Right cardiac atrium (tissue), 5 donors: ENCODE measurements at regions of chrX and their contacts with region 1.

Region 1: GRCh38 chrX:131763674-131764073 is 219.8 kb downstream of the OR13H1 start:
- DNase-seq: peak in 2 of 3 donors; percentile 69 to 76
- ATAC-seq: peak in 1 of 2 donors; percentile 96
- H3K4me3 ChIP-seq: no peak overlapping the region
- H3K27ac ChIP-seq: no peak overlapping the region
- H3K4me1 ChIP-seq: no peaks in the 10 kb centered on the region
- H3K27me3 ChIP-seq: no peaks in the 10 kb centered on the region

Region 2: DNA sequence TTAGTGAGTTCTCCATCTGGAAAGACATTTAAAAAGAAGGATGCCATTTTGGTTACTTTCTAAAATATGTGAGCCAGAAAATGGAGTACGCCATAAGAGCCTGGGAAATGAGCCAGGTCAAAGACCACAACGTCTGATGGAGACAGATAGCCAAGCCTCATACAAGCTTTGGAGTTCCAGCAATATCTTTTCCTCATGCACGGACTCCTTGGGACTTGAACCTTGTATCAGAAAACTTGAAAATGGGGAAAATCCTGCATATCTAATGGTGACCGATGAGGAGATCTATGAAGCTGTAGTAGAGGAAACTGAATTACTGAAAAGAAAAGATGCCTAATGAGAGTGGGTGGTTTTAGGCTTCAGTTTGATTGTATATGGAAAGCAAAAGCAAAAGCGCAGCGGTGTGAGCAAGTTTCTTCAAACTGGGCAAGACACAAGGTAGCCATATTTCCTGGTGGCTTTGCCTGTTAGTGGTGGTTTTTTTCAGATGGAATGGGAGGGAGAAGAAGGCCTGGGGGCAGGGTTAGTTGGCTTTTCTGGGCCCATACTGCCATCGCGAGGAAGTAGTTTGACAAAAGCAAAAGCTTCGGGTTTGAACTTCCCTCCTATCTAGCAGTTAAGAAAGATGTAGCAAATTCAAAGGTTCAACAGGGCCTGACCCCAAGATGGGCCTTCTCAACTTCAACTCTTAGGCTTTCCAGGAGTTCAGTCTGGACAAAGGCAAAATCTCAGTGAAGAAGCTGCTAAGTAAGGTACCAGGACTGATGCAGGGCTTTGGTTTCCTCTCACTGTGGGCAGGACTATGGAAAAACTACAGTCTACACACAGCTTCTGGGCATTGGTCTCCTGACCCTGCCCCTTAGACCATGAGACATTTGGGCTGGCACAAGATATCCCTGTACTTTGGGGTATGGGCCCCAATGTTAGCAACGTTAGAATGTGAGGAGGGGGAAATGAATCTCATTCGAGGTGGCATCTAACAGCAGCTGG is 49.5 kb after region 1 on chrX:
- intact Hi-C with region 1: loop called in 1 of 4 experiments (anchors 10 kb)
- DNase-seq: peak; percentile 42 to 84 (median 62)
- ATAC-seq: peak; percentile 47 to 94
- H3K4me3 ChIP-seq: peak overlapping the region; percentile 47
- H3K27ac ChIP-seq: peak overlapping the region; percentile 78
- H3K4me1 ChIP-seq: no peaks in the 10 kb centered on the region
- H3K27me3 ChIP-seq: no peaks in the 10 kb centered on the region